GM12878 (cell line): ENCODE measurements at regions of chr4 and their contacts with region 1.

Region 1: GRCh38 chr4:136713140-136713539 is 819.2 kb downstream of the PCDH18 start:
- DNase-seq: no peak
- ATAC-seq: peak; percentile 95
- H3K4me3 ChIP-seq: no peak overlapping the region
- H3K27ac ChIP-seq: no peak overlapping the region
- H3K4me1 ChIP-seq: no peaks in the 10 kb centered on the region
- H3K27me3 ChIP-seq: no peaks in the 10 kb centered on the region
- CTCF ChIP-seq: peak in 1 of 3 experiments; percentile 32; a peak in 1 of 6 replicates
- EP300 ChIP-seq: no peak
- POLR2A ChIP-seq: no peak
- RAD21 ChIP-seq: peak; percentile 36; the same call in 1 of the 2 replicates

Region 2: GRCh38 chr4:136650541-136651277 is 62.4 kb before region 1 on chr4:
- CTCF ChIA-PET with region 1: interaction called, 11 read pairs
- POLR2A ChIA-PET with region 1: interaction called, 5 read pairs
- RAD21 ChIA-PET with region 1: interaction called, 42 read pairs
- SMC1A ChIA-PET with region 1: interaction called, 33 read pairs
- in situ Hi-C with region 1: no loop called
- intact Hi-C with region 1: no loop called
- DNase-seq: peak; percentile 34
- ATAC-seq: peak; percentile 87
- H3K4me3 ChIP-seq: no peak overlapping the region
- H3K27ac ChIP-seq: no peak overlapping the region
- H3K4me1 ChIP-seq: no peaks in the 10 kb centered on the region
- H3K27me3 ChIP-seq: no peaks in the 10 kb centered on the region
- CTCF ChIP-seq: no peak
- EP300 ChIP-seq: peak; percentile 43 to 61; a peak in 2 of 4 replicates
- POLR2A ChIP-seq: no peak
- RAD21 ChIP-seq: no peak

Region 3: DNA sequence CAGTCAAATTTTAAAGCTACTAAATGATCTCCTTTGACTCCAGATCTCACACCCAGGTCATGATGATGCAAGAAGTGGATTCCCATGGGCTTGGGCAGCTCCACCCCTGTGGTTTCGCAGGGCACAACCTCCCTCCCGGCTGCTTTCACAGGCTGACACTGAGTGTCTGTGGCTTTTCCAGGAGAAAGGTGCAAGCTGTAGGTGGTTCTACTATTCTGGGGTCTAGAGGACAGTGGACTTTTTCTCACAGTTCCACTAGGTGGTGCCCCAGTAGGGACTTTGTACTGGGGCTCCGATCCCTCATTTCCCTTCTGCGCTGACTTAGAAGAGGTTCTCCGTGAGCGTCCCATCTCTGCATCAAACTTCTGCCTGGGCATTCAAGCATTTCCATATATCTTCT is 26.0 kb before region 1 on chr4:
- CTCF ChIA-PET with region 1: interaction called, 6 read pairs
- POLR2A ChIA-PET with region 1: interaction called, 8 read pairs
- RAD21 ChIA-PET with region 1: interaction called, 5 read pairs
- SMC1A ChIA-PET with region 1: interaction called, 10 read pairs
- in situ Hi-C with region 1: no loop called
- intact Hi-C with region 1: no loop called
- DNase-seq: no peak
- ATAC-seq: peak; percentile 49
- H3K4me3 ChIP-seq: no peak overlapping the region
- H3K27ac ChIP-seq: no peak overlapping the region
- H3K4me1 ChIP-seq: no peaks in the 10 kb centered on the region
- H3K27me3 ChIP-seq: no peaks in the 10 kb centered on the region; a peak in 1 of 4 replicates
- CTCF ChIP-seq: peak in 2 of 3 experiments; percentile 18 to 21; a peak in 2 of 6 replicates
- EP300 ChIP-seq: no peak
- POLR2A ChIP-seq: no peak
- RAD21 ChIP-seq: no peak

Region 4: DNA sequence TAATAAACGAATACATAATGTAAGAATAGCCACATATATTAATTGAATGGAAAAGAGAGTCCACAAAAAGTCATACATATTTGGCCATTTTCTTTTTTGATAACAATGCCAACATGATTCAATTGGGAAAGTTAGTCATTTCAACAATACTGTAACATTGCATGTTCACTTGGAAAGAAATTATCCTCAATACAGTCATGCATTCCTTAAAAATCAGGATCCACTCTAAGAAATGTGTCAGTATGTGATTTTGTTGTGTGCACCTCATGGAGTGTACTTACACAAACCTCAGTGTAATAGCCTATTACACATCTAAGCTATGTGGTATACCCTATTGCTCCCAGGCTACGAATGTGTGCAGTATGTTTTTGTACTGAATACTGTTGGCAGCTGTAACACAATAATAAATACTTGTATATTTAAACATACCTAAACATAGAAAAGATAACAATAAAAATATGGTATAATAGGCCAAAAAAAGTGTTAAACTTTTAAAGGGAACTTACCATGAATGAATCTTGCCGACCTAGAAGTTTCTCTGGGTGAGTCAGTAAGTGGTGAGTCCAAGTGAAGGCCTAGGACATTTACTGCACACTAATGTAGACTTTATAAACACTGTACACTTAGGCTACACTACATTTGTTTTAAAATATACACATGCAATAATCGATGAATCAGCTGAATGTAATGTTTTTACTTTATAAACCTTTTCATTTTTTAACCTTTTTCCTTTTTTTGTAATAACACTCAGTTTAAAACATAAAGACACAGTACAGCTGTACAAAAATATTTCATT is 12.3 kb after region 1 on chr4:
- CTCF ChIA-PET with region 1: interaction called, 5 read pairs
- POLR2A ChIA-PET with region 1: no interaction called
- RAD21 ChIA-PET with region 1: interaction called, 3 read pairs
- SMC1A ChIA-PET with region 1: interaction called, 10 read pairs
- in situ Hi-C with region 1: no loop called
- intact Hi-C with region 1: no loop called
- DNase-seq: no peak
- ATAC-seq: no peak
- H3K4me3 ChIP-seq: no peak overlapping the region
- H3K27ac ChIP-seq: no peak overlapping the region
- H3K4me1 ChIP-seq: no peaks in the 10 kb centered on the region
- H3K27me3 ChIP-seq: no peaks in the 10 kb centered on the region; a peak in 1 of 4 replicates
- CTCF ChIP-seq: no peak
- EP300 ChIP-seq: no peak
- POLR2A ChIP-seq: no peak
- RAD21 ChIP-seq: no peak

Region 5: DNA sequence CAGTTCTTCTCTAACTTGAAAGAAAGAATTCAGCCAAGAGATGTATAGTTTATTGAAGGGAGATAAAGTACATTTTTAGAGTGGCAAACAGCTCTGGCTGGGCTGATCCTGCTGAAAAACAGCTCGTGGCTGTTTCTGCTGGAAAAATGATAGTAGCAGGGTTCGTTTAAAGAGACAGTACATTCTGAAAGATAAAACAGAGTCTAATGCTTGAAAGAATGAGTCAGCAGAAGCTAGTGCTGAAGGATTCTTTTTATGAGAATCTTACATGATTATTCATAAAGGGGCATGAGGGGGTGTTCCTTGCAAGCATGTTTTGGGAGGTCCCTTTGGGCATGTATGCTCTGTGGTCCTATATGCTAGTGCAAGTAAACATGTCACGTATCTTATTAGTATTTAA is 29.2 kb after region 1 on chr4:
- CTCF ChIA-PET with region 1: interaction called, 3 read pairs
- POLR2A ChIA-PET with region 1: interaction called, 3 read pairs
- RAD21 ChIA-PET with region 1: no interaction called
- SMC1A ChIA-PET with region 1: interaction called, 3 read pairs
- in situ Hi-C with region 1: no loop called
- intact Hi-C with region 1: loop called (anchors 2 kb)
- DNase-seq: no peak
- ATAC-seq: no peak
- H3K4me3 ChIP-seq: no peak overlapping the region
- H3K27ac ChIP-seq: no peak overlapping the region
- H3K4me1 ChIP-seq: no peaks in the 10 kb centered on the region
- H3K27me3 ChIP-seq: no peaks in the 10 kb centered on the region
- CTCF ChIP-seq: no peak
- EP300 ChIP-seq: no peak
- POLR2A ChIP-seq: no peak
- RAD21 ChIP-seq: no peak

Region 6: DNA sequence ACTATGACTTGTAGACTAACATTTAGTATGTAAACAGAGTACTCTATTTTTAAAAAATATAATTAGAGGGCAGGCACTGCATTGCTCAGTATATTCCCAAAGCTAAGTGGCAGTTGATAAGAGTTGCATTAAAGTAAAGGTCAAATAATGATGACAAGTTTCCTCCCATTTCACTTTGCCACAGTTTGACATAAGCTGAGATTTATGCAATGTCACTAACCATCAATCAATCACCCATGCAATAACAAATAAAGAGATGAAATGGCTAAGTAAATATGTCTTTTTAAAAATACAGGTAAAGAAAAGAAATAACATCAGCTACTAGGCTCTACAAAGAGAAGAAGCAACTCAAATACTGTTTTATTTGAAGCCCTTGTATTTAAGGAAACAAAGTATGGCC is 145.8 kb after region 1 on chr4:
- CTCF ChIA-PET with region 1: interaction called, 81 read pairs
- POLR2A ChIA-PET with region 1: no interaction called
- RAD21 ChIA-PET with region 1: interaction called, 103 read pairs
- SMC1A ChIA-PET with region 1: interaction called, 76 read pairs
- in situ Hi-C with region 1: no loop called
- intact Hi-C with region 1: loop called (anchors 5 kb)
- DNase-seq: no peak
- ATAC-seq: no peak
- H3K4me3 ChIP-seq: no peak overlapping the region
- H3K27ac ChIP-seq: no peak overlapping the region
- H3K4me1 ChIP-seq: no peaks in the 10 kb centered on the region
- H3K27me3 ChIP-seq: no peaks in the 10 kb centered on the region
- CTCF ChIP-seq: no peak
- EP300 ChIP-seq: no peak
- POLR2A ChIP-seq: no peak
- RAD21 ChIP-seq: no peak